ENCODE measurements at regions of chr15 and their contacts with region 1.

Region 1: DNA sequence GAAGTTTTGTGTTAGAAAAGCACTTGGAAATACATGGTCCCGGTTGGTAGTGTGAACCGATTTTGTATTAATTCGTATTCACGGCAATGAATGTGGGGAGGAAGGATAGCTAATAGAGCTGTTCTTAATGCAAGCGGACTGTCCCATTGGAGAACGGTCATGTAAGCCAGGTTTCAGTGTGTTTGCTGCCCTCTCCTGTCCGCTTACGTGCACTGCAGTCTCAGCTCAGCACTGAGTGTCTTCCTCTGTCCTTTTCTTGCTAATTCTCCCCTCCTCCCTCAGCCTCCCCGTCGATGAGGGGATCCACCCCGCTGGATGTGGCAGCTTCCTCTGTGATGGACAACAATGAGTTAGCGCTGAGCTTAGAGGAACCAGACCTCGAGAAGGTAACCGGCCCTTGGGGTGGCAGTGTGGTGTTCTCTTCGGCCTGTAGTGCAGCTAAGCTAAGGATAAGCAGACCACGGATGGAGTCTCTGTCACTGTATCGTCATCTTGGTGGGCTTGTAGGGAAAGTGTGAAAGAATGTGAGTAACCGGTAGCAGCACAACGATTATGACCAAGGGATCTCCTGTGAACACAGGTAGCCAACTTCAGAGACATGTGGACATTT is 267.5 kb upstream of the CHRM5 start:
- DNase-seq: peak; percentile 11 to 80
- H3K4me3 ChIP-seq: no peak overlapping the region
- H3K27ac ChIP-seq: no peak overlapping the region
- H3K4me1 ChIP-seq: no peaks in the 10 kb centered on the region
- H3K27me3 ChIP-seq: no peaks in the 10 kb centered on the region
- CTCF ChIP-seq: peak; percentile 73 to 93 (median 93)

Region 2: GRCh38 chr15:33086507-33087121 is 614.2 kb before region 1 on chr15:
- intact Hi-C with region 1: loop called (anchors 10 kb)
- DNase-seq: no peak
- H3K4me3 ChIP-seq: no peak overlapping the region
- H3K27ac ChIP-seq: no peak overlapping the region
- H3K4me1 ChIP-seq: no peaks in the 10 kb centered on the region
- H3K27me3 ChIP-seq: no peaks in the 10 kb centered on the region
- CTCF ChIP-seq: peak in 2 of 3 experiments; percentile 29 to 53

Region 3: GRCh38 chr15:33292717-33293307 is 408.0 kb before region 1 on chr15:
- intact Hi-C with region 1: loop called (anchors 2 kb)
- DNase-seq: peak in 1 of 2 donors; percentile 74
- H3K4me3 ChIP-seq: peak overlapping the region in 1 of 2 donors; percentile 56
- H3K27ac ChIP-seq: no peak overlapping the region
- H3K4me1 ChIP-seq: peaks cover 0 to 5% of the 10 kb centered on the region in 2 donors
- H3K27me3 ChIP-seq: no peaks in the 10 kb centered on the region
- CTCF ChIP-seq: peak; percentile 46 to 71 (median 57)

Region 4: GRCh38 chr15:33309602-33310276 is 391.1 kb before region 1 on chr15:
- intact Hi-C with region 1: loop called (anchors 2 kb)
- DNase-seq: peak in 1 of 2 donors; percentile 70
- H3K4me3 ChIP-seq: peak overlapping the region in 1 of 2 donors; percentile 78
- H3K27ac ChIP-seq: no peak overlapping the region
- H3K4me1 ChIP-seq: no peaks in the 10 kb centered on the region
- H3K27me3 ChIP-seq: no peaks in the 10 kb centered on the region
- CTCF ChIP-seq: peak in 2 of 3 experiments; percentile 36 to 53

Region 5: DNA sequence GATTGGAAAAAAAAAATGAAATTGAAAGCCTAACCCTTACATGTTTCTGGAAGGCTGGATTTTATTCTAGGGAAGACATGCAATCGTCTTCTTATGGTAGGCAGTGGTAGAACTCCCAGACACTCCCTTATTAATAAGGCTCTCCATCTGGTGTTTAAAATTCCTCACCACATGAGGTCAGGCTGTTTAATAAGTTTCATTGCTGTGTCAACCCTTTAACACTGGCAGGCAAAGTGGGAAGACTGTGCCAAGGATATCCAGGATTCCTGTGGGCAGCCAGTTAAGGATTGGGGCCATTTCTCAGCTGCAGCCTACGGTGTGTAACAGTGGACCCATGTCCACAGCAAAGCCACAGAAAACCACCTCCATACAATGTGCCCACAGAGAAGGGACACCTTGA is 42.0 kb after region 1 on chr15:
- intact Hi-C with region 1: no loop called
- DNase-seq: no peak
- H3K4me3 ChIP-seq: no peak overlapping the region
- H3K27ac ChIP-seq: no peak overlapping the region
- H3K4me1 ChIP-seq: no peaks in the 10 kb centered on the region
- H3K27me3 ChIP-seq: no peaks in the 10 kb centered on the region
- CTCF ChIP-seq: no peak